Astrocyte of the cerebellum (primary cell): ENCODE measurements at regions of chr13 and their contacts with region 1.

Region 1: GRCh38 chr13:48975856-48976575 is at the start of gene FNDC3A:
- DNase-seq: peak; percentile 46
- H3K4me3 ChIP-seq: peak within 1 kb of the TSS; percentile 88
- CTCF ChIP-seq: no peak

Region 2: GRCh38 chr13:49023446-49023845 is 47.4 kb after region 1 on chr13:
- in situ Hi-C with region 1: loop called (anchors 10 kb)
- DNase-seq: peak; percentile 5
- H3K4me3 ChIP-seq: no peak overlapping the region
- CTCF ChIP-seq: no peak

Region 3: GRCh38 chr13:49206640-49207039 is 230.6 kb after region 1 on chr13:
- in situ Hi-C with region 1: loop called (anchors 10 kb)
- DNase-seq: no peak
- H3K4me3 ChIP-seq: no peak overlapping the region
- CTCF ChIP-seq: no peak